ENCODE measurements at regions of chr6 and their contacts with region 1.

Region 1: DNA sequence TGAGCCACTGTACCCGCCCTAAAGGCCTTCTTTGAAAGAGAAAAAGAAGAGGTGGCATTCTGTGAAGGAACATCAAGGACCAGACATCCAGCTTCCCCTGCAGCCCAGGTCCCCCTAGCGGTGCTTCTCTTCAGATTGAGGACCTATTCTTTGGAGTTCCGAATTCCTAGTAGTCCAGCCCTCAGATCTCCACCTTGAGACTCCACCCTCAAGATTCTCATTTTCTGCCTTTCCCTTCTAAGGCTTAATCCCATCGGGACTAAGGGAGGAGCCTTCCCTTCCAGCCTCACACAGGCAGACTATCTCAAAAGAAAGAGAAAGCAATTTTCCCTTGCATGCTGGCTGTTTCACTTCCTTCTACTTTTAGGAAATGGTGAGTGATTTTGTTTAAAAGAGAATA is 32.5 kb downstream of the MUC22 start:
- DNase-seq: peak; percentile 9
- H3K4me3 Mint-ChIP-seq: no peak overlapping the region
- H3K27ac Mint-ChIP-seq: no peak overlapping the region
- H3K4me1 Mint-ChIP-seq: peaks cover 7% of the 10 kb centered on the region
- H3K27me3 Mint-ChIP-seq: peaks cover 18% of the 10 kb centered on the region

Region 2: GRCh38 chr6:30998785-30999184 is 44.0 kb before region 1 on chr6:
- intact Hi-C with region 1: no loop called
- DNase-seq: no peak
- H3K4me3 Mint-ChIP-seq: no peak overlapping the region
- H3K27ac Mint-ChIP-seq: no peak overlapping the region
- H3K4me1 Mint-ChIP-seq: peaks cover 6% of the 10 kb centered on the region
- H3K27me3 Mint-ChIP-seq: peaks cover 2% of the 10 kb centered on the region

Region 3: DNA sequence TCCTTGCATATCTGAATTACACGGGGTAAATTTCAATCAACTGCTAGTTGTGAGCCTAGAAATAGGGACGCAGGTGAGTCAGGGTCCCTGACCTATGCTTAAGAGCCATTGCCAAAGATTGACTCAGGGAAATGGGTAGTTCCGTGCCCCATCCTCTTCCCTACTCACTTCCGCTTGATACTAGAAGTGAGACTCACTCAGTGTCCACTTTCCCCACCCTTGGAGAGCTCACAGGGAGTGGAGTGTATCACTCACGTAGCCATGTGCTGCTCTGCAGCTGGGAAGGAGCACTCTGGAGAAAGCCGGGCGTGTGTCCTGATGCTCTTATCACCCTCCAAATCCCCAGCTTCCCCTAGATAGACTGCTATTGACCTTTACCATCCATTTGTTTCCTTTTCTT is 33.1 kb before region 1 on chr6:
- intact Hi-C with region 1: loop called (anchors 1 kb)
- DNase-seq: no peak
- H3K4me3 Mint-ChIP-seq: no peak overlapping the region
- H3K27ac Mint-ChIP-seq: no peak overlapping the region
- H3K4me1 Mint-ChIP-seq: peaks cover 16% of the 10 kb centered on the region
- H3K27me3 Mint-ChIP-seq: peaks cover 17% of the 10 kb centered on the region

Region 4: DNA sequence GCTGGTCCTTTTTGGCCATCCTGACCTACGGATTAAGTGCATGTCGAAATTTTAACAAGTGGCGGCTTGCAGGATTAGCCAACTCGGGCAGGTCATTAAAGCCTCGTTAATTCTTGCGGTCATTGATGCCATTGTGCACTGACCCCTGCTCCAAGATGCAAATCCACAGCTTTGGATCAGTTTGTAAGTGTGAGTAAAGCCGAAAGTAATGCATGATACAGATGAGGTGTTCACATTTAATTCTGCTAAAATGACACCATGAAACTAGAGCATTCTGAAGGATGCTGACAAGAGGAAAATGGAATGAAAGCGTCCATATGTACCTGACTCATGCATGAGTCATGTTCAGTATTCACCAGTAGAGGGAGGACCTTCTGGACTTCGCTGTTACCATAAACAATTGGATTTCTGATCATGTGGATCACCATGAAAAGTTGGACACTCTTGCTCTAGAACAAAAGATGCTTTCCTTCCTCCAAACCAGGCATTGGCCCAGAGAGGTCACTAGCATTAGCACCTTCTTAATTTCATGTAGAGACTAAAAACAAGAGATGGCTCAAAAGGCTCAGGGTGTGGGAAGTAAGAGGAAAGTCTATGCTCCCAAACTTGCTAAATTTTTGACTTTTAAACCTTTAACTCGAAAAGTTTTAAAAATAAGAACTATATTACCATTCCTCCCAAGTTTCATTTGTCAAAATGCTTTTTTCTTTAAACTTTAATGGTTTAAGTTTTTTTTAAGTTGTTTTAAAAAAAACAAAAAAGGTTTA is 15.5 kb after region 1 on chr6:
- intact Hi-C with region 1: no loop called
- DNase-seq: no peak
- H3K4me3 Mint-ChIP-seq: no peak overlapping the region
- H3K27ac Mint-ChIP-seq: no peak overlapping the region
- H3K4me1 Mint-ChIP-seq: peaks cover 6% of the 10 kb centered on the region
- H3K27me3 Mint-ChIP-seq: peaks cover 22% of the 10 kb centered on the region